ENCODE measurements at regions of chr6 and their contacts with region 1.

Region 1: GRCh38 chr6:16761471-16762267 is 409 bp upstream of the ATXN1 start:
- DNase-seq: peak; percentile 90 to 94 (median 92)
- H3K4me3 ChIP-seq: peak overlapping the region in 2 of 4 donors; percentile 78 to 97
- H3K27ac ChIP-seq: peak overlapping the region; percentile 91 to 99 (median 94)
- H3K4me1 ChIP-seq: peaks cover 12 to 33% of the 10 kb centered on the region in 2 donors
- H3K27me3 ChIP-seq: no peaks in the 10 kb centered on the region
- CTCF ChIP-seq: peak in 3 of 6 experiments; percentile 20 to 45 (median 22)
- POLR2A ChIP-seq: peak; percentile 49 to 83

Region 2: GRCh38 chr6:16332175-16332542 is 429.5 kb before region 1 on chr6:
- intact Hi-C with region 1: loop called (anchors 10 kb)
- DNase-seq: peak; percentile 76 to 95 (median 86)
- H3K4me3 ChIP-seq: no peak overlapping the region
- H3K27ac ChIP-seq: peak overlapping the region in 4 of 5 donors; percentile 1 to 63 (median 44)
- H3K4me1 ChIP-seq: peaks cover 21 to 35% of the 10 kb centered on the region in 2 donors
- H3K27me3 ChIP-seq: no peaks in the 10 kb centered on the region
- CTCF ChIP-seq: peak; percentile 88 to 97 (median 93)
- POLR2A ChIP-seq: peak in 1 of 2 donors; percentile 33

Region 3: DNA sequence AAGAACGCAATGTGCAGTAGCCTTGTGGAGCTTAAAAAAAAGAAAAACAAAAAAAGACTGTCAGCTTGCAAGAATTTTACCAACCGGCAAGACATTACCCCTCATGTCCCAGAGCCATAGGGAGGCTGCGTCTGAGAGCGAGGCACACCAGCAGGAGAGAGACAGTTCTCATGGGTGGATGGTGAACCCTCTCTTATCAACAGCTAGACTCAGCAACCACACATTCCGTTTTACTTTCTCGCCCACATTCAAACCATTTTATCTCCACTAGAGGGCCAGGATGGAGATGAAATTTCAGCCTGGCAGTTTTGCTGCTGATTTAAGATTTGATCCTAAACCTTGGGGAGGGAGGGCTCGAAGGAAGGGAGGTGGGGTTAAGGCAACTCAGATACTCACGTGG is 247.4 kb before region 1 on chr6:
- intact Hi-C with region 1: loop called (anchors 5 to 10 kb)
- DNase-seq: peak in 1 of 7 donors; percentile 21
- H3K4me3 ChIP-seq: no peak overlapping the region
- H3K27ac ChIP-seq: no peak overlapping the region
- H3K4me1 ChIP-seq: peaks cover 0 to 14% of the 10 kb centered on the region in 2 donors
- H3K27me3 ChIP-seq: no peaks in the 10 kb centered on the region
- CTCF ChIP-seq: peak; percentile 21 to 68 (median 53)
- POLR2A ChIP-seq: no peak

Region 4: GRCh38 chr6:16670183-16670582 is 91.5 kb before region 1 on chr6:
- intact Hi-C with region 1: loop called in 1 of 2 experiments (anchors 10 kb)
- DNase-seq: peak in 4 of 7 donors; percentile 26 to 64 (median 40)
- H3K4me3 ChIP-seq: no peak overlapping the region
- H3K27ac ChIP-seq: peak overlapping the region in 2 of 5 donors; percentile 4 to 65
- H3K4me1 ChIP-seq: peaks cover 0 to 32% of the 10 kb centered on the region in 2 donors
- H3K27me3 ChIP-seq: no peaks in the 10 kb centered on the region
- CTCF ChIP-seq: no peak
- POLR2A ChIP-seq: no peak